Calu3 (cell line): ENCODE measurements at regions of chr19 and their contacts with region 1.

Region 1: GRCh38 chr19:1672038-1672768 is 19.8 kb upstream of the TCF3 start:
- DNase-seq: peak; percentile 56
- H3K4me3 Mint-ChIP-seq: peak overlapping the region; percentile 40
- H3K27ac Mint-ChIP-seq: no peak overlapping the region
- H3K4me1 Mint-ChIP-seq: peaks cover 13% of the 10 kb centered on the region
- H3K27me3 Mint-ChIP-seq: peaks cover 37% of the 10 kb centered on the region
- CTCF ChIP-seq: peak; percentile 93

Region 2: DNA sequence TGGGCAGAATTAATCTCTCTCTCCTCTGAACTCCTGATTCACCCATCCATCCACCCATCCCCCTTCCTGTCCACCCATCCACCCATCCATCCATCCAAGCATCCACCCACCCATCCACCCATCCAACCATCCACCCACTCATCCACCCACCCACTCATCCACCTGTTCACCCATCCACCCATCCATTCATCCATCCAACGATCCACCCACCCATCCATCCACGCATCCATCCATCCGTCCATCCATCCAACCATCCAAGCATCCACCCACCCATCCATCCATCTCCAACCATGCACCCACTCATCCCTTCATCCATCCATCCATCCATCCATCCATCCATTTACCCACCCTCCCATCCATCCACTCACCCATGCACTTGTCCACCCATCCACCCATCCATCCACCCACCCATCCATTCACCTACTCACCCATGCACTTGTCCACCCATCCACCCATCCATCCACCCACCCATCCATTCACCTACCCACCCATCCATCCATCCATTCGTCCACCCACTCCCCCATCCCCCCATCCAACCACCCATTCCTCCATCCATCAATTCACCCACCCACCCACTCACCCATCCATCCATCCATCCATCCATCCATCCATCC is 122.8 kb before region 1 on chr19:
- CTCF ChIA-PET with region 1: interaction called, 9 read pairs
- intact Hi-C with region 1: loop called (anchors 5 kb)
- DNase-seq: no peak
- H3K4me3 Mint-ChIP-seq: no peak overlapping the region
- H3K27ac Mint-ChIP-seq: no peak overlapping the region
- H3K4me1 Mint-ChIP-seq: no peaks in the 10 kb centered on the region
- H3K27me3 Mint-ChIP-seq: no peaks in the 10 kb centered on the region
- CTCF ChIP-seq: no peak

Region 3: GRCh38 chr19:1632462-1633268 is 39.5 kb before region 1 on chr19:
- CTCF ChIA-PET with region 1: no interaction called
- intact Hi-C with region 1: no loop called
- DNase-seq: no peak
- H3K4me3 Mint-ChIP-seq: no peak overlapping the region
- H3K27ac Mint-ChIP-seq: no peak overlapping the region
- H3K4me1 Mint-ChIP-seq: no peaks in the 10 kb centered on the region
- H3K27me3 Mint-ChIP-seq: no peaks in the 10 kb centered on the region
- CTCF ChIP-seq: no peak

Region 4: GRCh38 chr19:1747285-1748114 is 75.3 kb after region 1 on chr19:
- CTCF ChIA-PET with region 1: interaction called, 11 read pairs
- intact Hi-C with region 1: no loop called
- DNase-seq: peak; percentile 95
- H3K4me3 Mint-ChIP-seq: peak overlapping the region; percentile 64
- H3K27ac Mint-ChIP-seq: peak overlapping the region; percentile 91
- H3K4me1 Mint-ChIP-seq: no peaks in the 10 kb centered on the region
- H3K27me3 Mint-ChIP-seq: no peaks in the 10 kb centered on the region
- CTCF ChIP-seq: no peak

Region 5: GRCh38 chr19:1754616-1755466 is 82.6 kb after region 1 on chr19:
- CTCF ChIA-PET with region 1: interaction called, 3 read pairs
- intact Hi-C with region 1: loop called (anchors 5 kb)
- DNase-seq: peak; percentile 55
- H3K4me3 Mint-ChIP-seq: peak overlapping the region; percentile 80
- H3K27ac Mint-ChIP-seq: peak overlapping the region; percentile 74
- H3K4me1 Mint-ChIP-seq: peaks cover 9% of the 10 kb centered on the region
- H3K27me3 Mint-ChIP-seq: no peaks in the 10 kb centered on the region
- CTCF ChIP-seq: no peak

Region 6: GRCh38 chr19:1780272-1780958 is 108.2 kb after region 1 on chr19:
- CTCF ChIA-PET with region 1: interaction called, 19 read pairs
- intact Hi-C with region 1: no loop called
- DNase-seq: peak; percentile 53
- H3K4me3 Mint-ChIP-seq: no peak overlapping the region
- H3K27ac Mint-ChIP-seq: no peak overlapping the region
- H3K4me1 Mint-ChIP-seq: peaks cover 20% of the 10 kb centered on the region
- H3K27me3 Mint-ChIP-seq: no peaks in the 10 kb centered on the region
- CTCF ChIP-seq: no peak

Region 7: DNA sequence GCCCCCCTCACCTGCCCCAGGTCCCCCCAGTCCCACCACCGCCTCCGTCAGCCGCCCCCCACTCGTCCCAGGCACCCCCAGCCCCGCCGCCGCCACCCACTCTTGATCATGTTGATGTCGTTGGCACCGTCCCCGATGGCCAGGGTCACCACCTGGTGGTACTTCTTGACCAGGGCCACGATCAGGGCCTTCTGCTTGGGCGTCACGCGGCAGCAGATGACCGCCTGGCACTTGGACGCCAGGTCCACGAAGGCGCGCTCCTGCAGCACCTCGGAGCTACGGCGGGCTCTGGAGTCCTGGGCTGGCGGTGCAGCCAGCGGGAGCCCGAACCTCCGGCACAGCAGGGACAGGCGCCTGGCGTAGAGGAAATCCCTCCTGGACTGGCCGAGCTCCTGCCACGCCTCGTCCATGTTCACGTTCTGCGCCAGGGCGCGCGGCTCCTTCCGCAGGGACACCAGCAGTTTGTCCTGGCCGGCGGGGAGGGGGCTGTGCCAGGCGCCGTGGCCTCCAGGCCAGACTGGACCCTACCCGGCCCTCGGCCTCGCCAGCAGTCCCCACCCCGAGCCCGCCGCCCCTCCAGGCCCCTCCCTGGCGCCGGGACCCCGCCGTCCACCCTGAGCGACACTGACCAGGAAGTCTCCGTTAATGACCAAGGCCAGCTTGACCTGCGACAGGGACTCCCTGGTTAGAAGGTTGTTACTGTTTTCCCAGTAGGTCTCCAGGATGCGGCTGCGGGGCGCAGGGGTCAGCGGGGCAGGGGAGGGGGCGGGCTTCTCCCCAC is 117.2 kb after region 1 on chr19:
- CTCF ChIA-PET with region 1: interaction called, 3 read pairs
- intact Hi-C with region 1: loop called (anchors 10 kb)
- DNase-seq: no peak
- H3K4me3 Mint-ChIP-seq: no peak overlapping the region
- H3K27ac Mint-ChIP-seq: no peak overlapping the region
- H3K4me1 Mint-ChIP-seq: no peaks in the 10 kb centered on the region
- H3K27me3 Mint-ChIP-seq: no peaks in the 10 kb centered on the region
- CTCF ChIP-seq: no peak

Region 8: DNA sequence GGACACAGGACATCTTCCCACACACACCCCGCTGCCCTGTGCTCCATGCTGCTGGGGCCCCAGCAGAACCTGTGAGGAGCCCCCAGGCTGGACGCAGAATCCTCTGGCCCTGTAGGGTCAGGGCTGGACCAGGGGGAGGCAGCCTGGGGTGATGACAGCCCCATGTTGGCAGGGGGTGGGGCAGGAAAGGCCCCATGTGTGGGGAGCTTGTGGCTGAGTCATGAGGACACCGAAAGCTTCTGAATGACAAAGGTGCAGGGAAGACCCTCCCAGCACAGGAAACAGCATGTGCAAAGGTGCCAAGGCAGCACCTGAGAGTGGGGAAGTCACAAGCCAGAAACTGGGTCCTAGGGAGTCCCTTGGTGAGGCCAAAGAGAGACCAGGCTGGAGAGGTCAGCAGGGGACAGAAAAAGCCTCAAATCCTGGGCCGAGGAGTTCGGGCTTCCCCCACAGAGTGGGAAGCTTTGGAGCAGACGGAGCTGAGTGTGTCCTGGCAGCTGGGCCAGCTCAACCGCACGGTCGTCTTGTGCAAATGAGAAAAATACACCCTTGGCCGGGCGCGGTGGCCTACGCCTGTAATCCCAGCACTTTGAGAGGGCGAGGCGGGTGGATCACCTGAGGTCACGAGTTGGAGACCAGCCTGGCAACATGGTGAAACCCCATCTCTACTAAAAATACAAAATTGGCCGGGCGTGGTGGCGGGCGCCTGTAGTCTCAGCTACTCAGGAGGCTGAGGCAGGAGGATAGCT is 122.4 kb after region 1 on chr19:
- CTCF ChIA-PET with region 1: interaction called, 10 read pairs
- intact Hi-C with region 1: loop called (anchors 10 kb)
- DNase-seq: no peak
- H3K4me3 Mint-ChIP-seq: no peak overlapping the region
- H3K27ac Mint-ChIP-seq: no peak overlapping the region
- H3K4me1 Mint-ChIP-seq: peaks cover 8% of the 10 kb centered on the region
- H3K27me3 Mint-ChIP-seq: no peaks in the 10 kb centered on the region
- CTCF ChIP-seq: no peak